ENCODE measurements at regions of chr3 and their contacts with region 1.

Region 1: GRCh38 chr3:98522244-98523090 is at the start of gene CLDND1:
- H3K4me3 Mint-ChIP-seq: peak within 1 kb of the TSS; percentile 85
- H3K27ac Mint-ChIP-seq: peak within 1 kb of the TSS; percentile 98
- H3K4me1 Mint-ChIP-seq: peaks cover 35% of the 10 kb centered on the region
- H3K27me3 Mint-ChIP-seq: no peaks in the 10 kb centered on the region

Region 2: DNA sequence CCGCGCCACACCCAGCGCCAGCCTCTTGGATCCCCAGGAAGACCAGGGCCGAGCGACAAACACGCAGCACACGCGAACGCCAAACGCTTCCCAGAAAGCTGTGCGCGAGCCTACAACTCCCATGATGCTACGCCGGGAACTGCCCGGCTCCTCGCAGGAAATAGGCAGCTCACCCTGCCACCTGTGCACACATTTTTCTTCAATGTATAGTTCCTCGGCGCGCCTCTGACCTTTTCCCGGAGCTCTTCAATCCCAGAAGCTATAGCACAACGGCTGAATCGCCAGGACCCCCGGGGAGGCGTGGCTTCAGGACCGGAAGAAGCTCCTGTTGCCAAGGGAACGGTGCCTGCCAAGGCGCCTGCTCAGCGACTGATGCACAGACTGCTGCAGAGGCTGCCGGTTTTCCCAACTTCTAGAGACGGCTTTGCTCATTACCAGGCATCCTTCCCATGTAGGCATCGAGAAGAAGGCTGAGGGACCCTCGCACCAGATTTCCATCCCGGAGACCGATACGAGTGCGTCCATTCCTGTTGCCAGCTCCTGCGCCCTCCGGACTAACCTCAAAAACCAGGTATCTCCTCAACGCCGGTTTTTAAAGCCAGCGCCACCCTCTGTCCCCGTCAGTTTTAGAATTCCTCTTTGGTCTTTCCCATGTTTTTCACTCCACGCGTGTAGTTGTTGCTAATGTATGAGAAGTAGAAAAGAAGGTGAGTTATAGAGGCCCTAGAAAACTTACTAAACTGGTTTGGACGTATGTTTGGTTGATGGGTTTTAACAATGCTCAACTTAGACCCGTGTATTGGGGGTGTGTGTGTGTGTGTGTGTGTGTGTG is 757.8 kb before region 1 on chr3 and contains the start of gene ARL6:
- intact Hi-C with region 1: loop called (anchors 2 kb)
- H3K4me3 Mint-ChIP-seq: peak within 1 kb of the TSS; percentile 98
- H3K27ac Mint-ChIP-seq: peak within 1 kb of the TSS; percentile 88
- H3K4me1 Mint-ChIP-seq: peaks cover 21% of the 10 kb centered on the region
- H3K27me3 Mint-ChIP-seq: peaks cover 6% of the 10 kb centered on the region

Region 3: DNA sequence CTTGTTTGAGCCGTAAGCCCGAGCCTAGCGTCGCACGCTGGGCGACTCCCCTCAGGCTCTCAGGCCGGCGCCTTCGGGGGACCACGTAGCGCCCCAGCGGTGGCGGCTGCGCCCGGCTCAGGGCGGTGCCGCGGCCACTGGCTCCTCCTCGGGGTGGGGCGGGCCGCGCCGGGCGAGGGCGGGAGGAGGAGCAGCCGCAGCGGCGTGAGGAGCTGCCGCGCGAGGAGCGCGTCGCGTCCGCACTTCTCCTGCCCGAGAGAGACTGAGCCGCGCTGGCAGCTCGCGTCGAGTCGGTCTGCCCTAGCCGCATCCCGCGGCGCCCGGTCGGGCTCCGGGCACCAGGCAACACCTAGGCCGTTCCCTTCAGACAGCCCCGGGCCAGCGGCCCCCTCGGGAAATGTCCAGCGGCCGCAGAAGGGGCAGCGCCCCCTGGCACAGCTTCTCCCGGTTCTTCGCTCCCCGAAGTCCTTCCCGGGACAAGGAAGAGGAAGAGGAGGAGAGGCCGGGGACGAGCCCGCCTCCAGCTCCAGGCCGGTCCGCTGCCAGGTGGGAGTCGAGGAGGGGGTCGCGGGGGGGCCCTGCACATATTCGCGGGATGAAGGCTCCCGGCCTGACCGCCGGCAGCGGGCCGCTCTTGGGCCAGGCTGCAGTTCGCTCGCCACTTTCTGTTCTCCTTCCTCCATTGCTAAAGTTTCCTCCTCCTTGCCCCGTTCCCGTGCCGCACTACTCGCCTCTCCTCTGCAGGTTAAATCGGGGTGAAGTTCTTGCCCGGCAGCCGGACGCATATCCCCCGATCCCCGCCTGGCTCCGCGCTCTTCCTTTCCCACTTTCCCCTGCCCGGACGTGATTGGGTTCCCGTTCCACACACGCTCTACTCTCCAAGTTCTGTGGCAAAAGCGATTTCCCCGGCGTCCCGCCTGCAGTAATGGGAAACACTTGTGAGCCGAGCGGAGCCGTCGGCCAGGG is 700.4 kb before region 1 on chr3 and contains the start of gene CRYBG3:
- intact Hi-C with region 1: loop called (anchors 10 kb)
- H3K4me3 Mint-ChIP-seq: peak within 1 kb of the TSS; percentile 99
- H3K27ac Mint-ChIP-seq: peak within 1 kb of the TSS; percentile 88
- H3K4me1 Mint-ChIP-seq: peaks cover 26% of the 10 kb centered on the region
- H3K27me3 Mint-ChIP-seq: peaks cover 26% of the 10 kb centered on the region

Region 4: GRCh38 chr3:98039322-98040024 is 483.0 kb before region 1 on chr3:
- intact Hi-C with region 1: loop called (anchors 1 kb)
- H3K4me3 Mint-ChIP-seq: peak overlapping the region; percentile 71
- H3K27ac Mint-ChIP-seq: no peak overlapping the region
- H3K4me1 Mint-ChIP-seq: peaks cover 5% of the 10 kb centered on the region
- H3K27me3 Mint-ChIP-seq: peaks cover 10% of the 10 kb centered on the region

Region 5: GRCh38 chr3:98563661-98564281 is 41.3 kb after region 1 on chr3:
- intact Hi-C with region 1: loop called (anchors 5 kb)
- H3K4me3 Mint-ChIP-seq: no peak overlapping the region
- H3K27ac Mint-ChIP-seq: no peak overlapping the region
- H3K4me1 Mint-ChIP-seq: peaks cover 26% of the 10 kb centered on the region
- H3K27me3 Mint-ChIP-seq: peaks cover 6% of the 10 kb centered on the region

Region 6: GRCh38 chr3:98593046-98593936 is 70.8 kb after region 1 on chr3 and contains the start of gene CPOX:
- intact Hi-C with region 1: loop called (anchors 1 kb)
- H3K4me3 Mint-ChIP-seq: peak within 1 kb of the TSS; percentile 97
- H3K27ac Mint-ChIP-seq: peak within 1 kb of the TSS; percentile 82
- H3K4me1 Mint-ChIP-seq: peaks cover 60% of the 10 kb centered on the region
- H3K27me3 Mint-ChIP-seq: no peaks in the 10 kb centered on the region

Region 7: GRCh38 chr3:98901392-98902350 is 379.2 kb after region 1 on chr3 and contains the start of gene DCBLD2:
- intact Hi-C with region 1: loop called (anchors 1 kb)
- H3K4me3 Mint-ChIP-seq: peak within 1 kb of the TSS; percentile 85
- H3K27ac Mint-ChIP-seq: peak within 1 kb of the TSS; percentile 89
- H3K4me1 Mint-ChIP-seq: peaks cover 14% of the 10 kb centered on the region
- H3K27me3 Mint-ChIP-seq: peaks cover 19% of the 10 kb centered on the region